Activated CD8-positive, alpha-beta T cell treated with anti-CD3 and anti-CD28 coated beads for 36 hours (primary cell): ENCODE measurements at regions of chr17 and their contacts with region 1.

Region 1: GRCh38 chr17:44070455-44071197 is at the start of gene G6PC3:
- DNase-seq: peak; percentile 95
- ATAC-seq: peak; percentile 85
- H3K4me3 Mint-ChIP-seq: peak within 1 kb of the TSS; percentile 84
- H3K27ac Mint-ChIP-seq: peak within 1 kb of the TSS; percentile 94
- H3K4me1 Mint-ChIP-seq: peaks cover 33% of the 10 kb centered on the region
- H3K27me3 Mint-ChIP-seq: no peaks in the 10 kb centered on the region
- CTCF ChIP-seq: no peak
- total RNA-seq, gene G6PC3: 20.2 to 20.7 TPM

Region 2: DNA sequence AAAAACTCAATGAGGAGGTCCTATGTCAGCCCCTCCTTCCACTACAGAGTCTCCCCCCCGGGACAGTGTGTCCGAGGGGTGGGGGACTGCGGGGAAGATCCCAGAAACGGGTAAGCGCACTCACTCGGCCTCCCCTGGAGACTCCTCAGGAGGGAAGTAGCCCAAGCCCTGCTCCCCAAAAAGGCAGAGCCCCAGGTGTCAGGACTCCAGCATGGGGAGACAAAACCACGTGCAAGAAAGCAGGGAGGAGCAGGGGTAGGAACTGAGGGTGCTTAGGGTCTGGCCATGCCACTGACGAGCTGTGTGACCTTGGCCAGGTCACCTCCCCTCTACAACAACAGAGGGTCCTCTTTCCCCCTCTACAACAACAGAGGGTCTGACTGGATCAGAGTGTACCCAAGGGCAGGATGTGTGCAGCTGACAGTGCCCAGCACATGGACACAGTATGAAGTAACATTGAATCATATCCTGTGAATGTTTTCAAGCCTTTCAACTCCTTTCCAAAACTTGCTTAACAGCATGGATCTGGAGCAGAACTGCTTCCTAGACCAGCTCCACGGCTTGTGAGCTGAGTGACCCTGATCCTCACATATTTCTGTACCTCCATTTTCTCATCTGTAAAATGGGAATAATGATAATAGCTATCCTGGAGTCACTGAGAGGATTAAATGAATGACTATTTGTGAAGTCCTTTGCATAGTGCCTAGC is 68.3 kb before region 1 on chr17:
- CTCF ChIA-PET with region 1: no interaction called
- POLR2A ChIA-PET with region 1: no interaction called
- intact Hi-C with region 1: no loop called
- DNase-seq: no peak
- ATAC-seq: no peak
- H3K4me3 Mint-ChIP-seq: no peak overlapping the region
- H3K27ac Mint-ChIP-seq: no peak overlapping the region
- H3K4me1 Mint-ChIP-seq: peaks cover 13% of the 10 kb centered on the region
- H3K27me3 Mint-ChIP-seq: peaks cover 17% of the 10 kb centered on the region
- CTCF ChIP-seq: no peak

Region 3: GRCh38 chr17:44086364-44087311 is 16.0 kb after region 1 on chr17:
- CTCF ChIA-PET with region 1: interaction called, 17 read pairs
- POLR2A ChIA-PET with region 1: interaction called, 8 read pairs
- intact Hi-C with region 1: no loop called
- DNase-seq: peak; percentile 82
- ATAC-seq: peak; percentile 92
- H3K4me3 Mint-ChIP-seq: no peak overlapping the region
- H3K27ac Mint-ChIP-seq: peak overlapping the region; percentile 59
- H3K4me1 Mint-ChIP-seq: peaks cover 16% of the 10 kb centered on the region
- H3K27me3 Mint-ChIP-seq: no peaks in the 10 kb centered on the region
- CTCF ChIP-seq: no peak

Region 4: DNA sequence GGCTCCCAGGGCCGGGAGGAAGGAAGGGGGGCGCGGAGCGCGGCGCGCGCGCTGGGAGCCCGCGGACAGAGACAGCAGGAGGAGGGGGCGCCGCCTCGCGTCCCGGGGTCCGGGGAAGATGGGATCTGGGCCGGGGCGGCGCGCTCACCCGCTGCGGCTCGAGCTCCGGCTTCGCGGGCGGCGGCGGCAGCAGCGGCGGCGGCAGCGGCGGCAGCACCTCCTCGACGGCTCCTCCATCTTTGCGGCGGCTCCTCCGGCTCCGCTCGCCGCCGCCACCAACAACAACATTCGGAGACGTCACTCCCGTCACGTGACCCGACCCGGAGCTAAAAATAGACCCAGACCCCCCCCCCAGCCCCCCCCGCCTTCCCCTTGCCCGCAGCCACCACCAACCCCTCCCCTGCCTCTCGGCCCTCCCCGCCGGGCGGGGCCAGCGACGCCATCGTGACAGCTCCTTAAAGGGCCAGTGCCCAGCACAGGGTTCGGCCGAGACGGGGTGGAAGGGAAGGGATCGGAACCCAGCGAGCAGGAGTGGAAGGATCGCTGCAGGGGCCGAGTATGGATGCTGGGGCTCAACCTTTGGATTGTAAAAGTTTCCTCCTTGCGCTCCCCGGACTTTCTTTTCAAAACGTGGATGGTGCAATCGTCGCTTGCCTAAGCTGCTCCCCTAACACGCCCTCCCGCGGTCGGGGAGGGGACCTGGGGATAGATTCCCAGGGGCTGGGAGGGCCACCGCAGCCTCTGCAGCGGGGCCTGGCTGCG is 52.9 kb after region 1 on chr17 and contains the start of gene HDAC5:
- CTCF ChIA-PET with region 1: interaction called, 4 read pairs
- POLR2A ChIA-PET with region 1: interaction called, 6 read pairs
- intact Hi-C with region 1: loop called (anchors 10 kb)
- DNase-seq: peak; percentile 97
- ATAC-seq: peak; percentile 97
- H3K4me3 Mint-ChIP-seq: peak within 1 kb of the TSS; percentile 82
- H3K27ac Mint-ChIP-seq: peak within 1 kb of the TSS; percentile 96
- H3K4me1 Mint-ChIP-seq: peaks cover 26% of the 10 kb centered on the region
- H3K27me3 Mint-ChIP-seq: no peaks in the 10 kb centered on the region
- CTCF ChIP-seq: peak; percentile 50
- total RNA-seq, gene HDAC5: 19.1 to 19.3 TPM